ENCODE measurements at regions of chr10 and their contacts with region 1.

Region 1: DNA sequence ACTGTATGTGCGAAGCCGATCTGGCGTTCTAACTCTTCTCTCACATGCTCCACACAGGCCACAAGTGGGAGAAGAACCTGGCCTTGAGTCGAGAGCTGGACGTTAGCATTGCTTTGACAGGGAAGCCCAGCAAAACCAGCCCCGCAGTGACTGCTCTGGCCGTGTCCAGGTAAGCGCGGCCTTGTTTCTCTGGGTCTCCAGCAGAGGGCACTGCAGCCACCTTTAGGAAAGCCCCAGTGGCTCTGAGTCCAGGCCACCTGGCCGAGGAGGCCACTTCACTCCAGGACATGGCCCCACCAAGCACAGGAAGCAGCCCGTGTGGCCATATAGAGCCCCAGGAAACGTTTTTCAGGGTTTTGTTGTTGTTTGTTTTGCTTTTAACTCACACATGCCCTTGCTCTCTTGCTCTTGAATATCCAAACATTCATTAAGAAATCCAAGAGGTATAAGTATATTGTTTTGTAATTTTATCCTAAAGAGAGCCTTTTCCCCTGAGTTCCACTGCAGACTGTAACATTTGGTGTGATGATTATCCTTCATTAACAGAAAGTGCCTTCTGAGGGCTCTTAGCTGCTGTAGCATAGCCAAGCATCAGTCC is 41.8 kb upstream of the LRRC18 start:
- DNase-seq: peak in 5 of 10 donors; percentile 48 to 91 (median 62)

Region 2: GRCh38 chr10:49115015-49115795 is 133.8 kb after region 1 on chr10 and contains the start of gene VSTM4:
- intact Hi-C with region 1: loop called (anchors 10 kb)
- DNase-seq: peak in 8 of 10 donors; percentile 29 to 92 (median 42)

Region 3: DNA sequence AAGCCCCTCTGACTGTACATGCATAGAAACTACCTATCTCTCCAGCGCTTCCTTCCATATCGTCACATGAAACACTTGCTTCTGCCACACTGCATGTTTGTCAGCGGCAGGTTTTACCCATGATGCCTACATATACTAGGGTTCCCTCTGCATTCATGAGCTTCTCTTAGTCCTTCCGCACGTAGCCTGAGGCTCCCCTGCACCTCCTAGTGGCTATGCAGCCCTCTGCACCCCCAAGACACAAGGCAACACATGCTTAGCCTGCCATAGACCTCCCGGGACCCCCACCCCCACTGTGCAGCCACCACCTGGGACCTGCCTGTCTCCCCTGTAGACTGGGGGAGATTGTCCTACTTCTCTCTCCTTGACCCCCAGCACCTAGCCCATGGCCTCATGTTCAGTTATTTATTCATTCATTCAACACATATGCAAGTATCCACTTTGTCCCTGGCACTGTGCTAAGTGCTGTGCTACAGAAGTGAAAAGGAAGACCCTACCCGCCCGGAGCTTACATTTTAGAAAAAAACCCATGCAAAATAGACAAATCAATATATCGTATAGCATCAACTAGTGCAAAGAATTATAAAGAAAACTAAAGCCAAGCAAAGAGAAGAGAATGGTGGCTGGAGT is 183.3 kb after region 1 on chr10:
- intact Hi-C with region 1: loop called (anchors 1 kb)
- DNase-seq: peak in 4 of 10 donors; percentile 31 to 42 (median 34)